ENCODE measurements at regions of chr17 and their contacts with region 1.

Region 1: GRCh38 chr17:7014995-7015958 is 2.9 kb downstream of the RNASEK start:
- DNase-seq: no peak
- H3K4me3 ChIP-seq: peak overlapping the region; percentile 94 to 98
- H3K27ac ChIP-seq: peak overlapping the region; percentile 96 to 97
- H3K4me1 ChIP-seq: peaks cover 17% of the 10 kb centered on the region
- H3K27me3 ChIP-seq: no peaks in the 10 kb centered on the region
- CTCF ChIP-seq: no peak
- POLR2A ChIP-seq: peak; percentile 55

Region 2: GRCh38 chr17:6269478-6269877 is 745.8 kb before region 1 on chr17:
- intact Hi-C with region 1: no loop called
- DNase-seq: no peak
- H3K4me3 ChIP-seq: no peak overlapping the region
- H3K27ac ChIP-seq: no peak overlapping the region
- H3K4me1 ChIP-seq: no peaks in the 10 kb centered on the region
- H3K27me3 ChIP-seq: no peaks in the 10 kb centered on the region
- CTCF ChIP-seq: no peak
- POLR2A ChIP-seq: no peak

Region 3: DNA sequence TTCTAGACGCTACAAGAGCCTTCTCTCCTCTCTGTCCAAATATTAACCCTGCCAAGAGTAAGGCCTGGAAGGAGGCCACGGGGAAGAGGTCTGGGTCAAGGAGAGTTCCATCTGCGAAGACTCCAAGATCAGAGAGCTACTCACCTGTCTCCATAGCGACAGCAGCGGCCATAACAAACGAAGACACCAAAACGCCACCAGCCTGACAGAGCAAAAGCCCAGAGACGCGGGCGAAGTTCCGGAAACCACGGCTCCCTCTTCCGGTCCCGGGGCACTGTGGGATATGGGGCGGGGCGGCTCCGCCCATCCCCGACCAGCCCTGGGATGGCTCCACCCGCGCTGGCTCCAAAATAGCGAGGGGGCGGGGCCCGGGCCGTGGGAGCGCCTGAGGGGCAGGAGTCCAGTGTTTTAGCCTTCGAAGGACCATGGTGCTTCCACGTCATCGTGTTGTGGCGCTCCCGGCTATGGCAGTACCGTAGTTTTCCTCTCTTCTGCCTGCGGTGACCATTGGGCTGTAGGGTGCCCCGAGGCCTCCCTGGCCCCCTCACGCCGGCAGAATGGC is 363.8 kb before region 1 on chr17 and contains the starts of genes C17orf100 and MED31:
- intact Hi-C with region 1: loop called (anchors 5 kb)
- DNase-seq: peak; percentile 90
- H3K4me3 ChIP-seq: peak within 1 kb of the TSS; percentile 70 to 71
- H3K27ac ChIP-seq: peak within 1 kb of the TSS; percentile 80 to 84
- H3K4me1 ChIP-seq: peaks cover 11% of the 10 kb centered on the region
- H3K27me3 ChIP-seq: peaks cover 2% of the 10 kb centered on the region
- CTCF ChIP-seq: peak in 2 of 4 experiments; percentile 11 to 19
- POLR2A ChIP-seq: peak; percentile 67
- total RNA-seq, gene C17orf100: 3.5 to 6.1 TPM
- total RNA-seq, gene MED31: 8.3 to 10.7 TPM

Region 4: GRCh38 chr17:6701719-6702118 is 313.6 kb before region 1 on chr17:
- intact Hi-C with region 1: no loop called
- DNase-seq: no peak
- H3K4me3 ChIP-seq: no peak overlapping the region
- H3K27ac ChIP-seq: no peak overlapping the region
- H3K4me1 ChIP-seq: no peaks in the 10 kb centered on the region
- H3K27me3 ChIP-seq: no peaks in the 10 kb centered on the region
- CTCF ChIP-seq: no peak
- POLR2A ChIP-seq: no peak

Measured in prostate gland (tissue), 2 donors.